ENCODE measurements at regions of chr6 and their contacts with region 1.

Region 1: DNA sequence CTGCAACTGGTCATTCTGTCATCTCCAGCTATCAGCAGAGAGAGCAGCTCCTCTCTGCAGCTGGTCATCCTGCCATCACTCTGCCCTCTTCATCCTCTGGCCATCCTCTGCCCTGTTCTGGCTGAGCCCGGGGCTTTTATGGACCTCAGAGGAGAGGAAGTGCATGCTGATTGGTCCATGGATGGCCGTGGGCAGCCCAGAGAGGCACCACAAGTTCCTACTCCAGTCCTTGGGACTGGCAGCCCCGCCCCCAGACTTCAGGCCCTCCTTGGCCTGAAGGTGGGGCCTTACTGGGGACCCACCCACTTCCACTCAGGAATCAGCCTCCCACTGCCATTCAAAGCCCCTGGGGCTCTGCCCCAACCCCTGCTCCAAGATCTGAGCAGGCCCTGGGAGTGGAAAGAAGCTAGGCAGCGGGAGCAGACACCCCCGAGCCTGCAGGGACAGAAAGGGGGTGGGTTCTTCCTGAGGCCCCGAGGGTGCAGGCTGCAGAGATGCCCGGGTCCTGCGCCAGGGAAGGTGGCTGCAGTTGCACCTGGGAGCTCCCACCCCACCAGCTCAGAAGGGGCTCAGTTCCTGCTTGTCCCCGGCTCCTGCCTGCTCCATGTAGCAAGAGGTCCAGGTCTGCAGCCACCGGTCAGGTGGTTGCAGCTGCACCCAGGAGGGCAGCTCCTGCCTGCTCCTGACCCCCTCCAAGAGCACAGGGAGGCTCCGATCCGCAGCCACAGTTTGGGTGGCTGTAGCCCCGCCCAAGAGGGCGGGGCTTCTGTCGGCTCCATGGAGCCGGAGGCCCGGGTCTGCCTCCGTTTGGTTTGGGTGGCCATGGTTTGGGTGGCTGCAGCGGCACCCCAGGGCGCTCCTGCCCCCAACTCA is 34.1 kb upstream of the HMGA1 start:
- DNase-seq: no peak
- H3K4me3 ChIP-seq: no peak overlapping the region
- H3K4me3 Mint-ChIP-seq: no peak overlapping the region
- H3K27ac ChIP-seq: no peak overlapping the region
- H3K27ac Mint-ChIP-seq: no peak overlapping the region
- H3K4me1 ChIP-seq: peaks cover 5% of the 10 kb centered on the region
- H3K4me1 Mint-ChIP-seq: peaks cover under 1 to 7% (median 1%) of the 10 kb centered on the region in 4 donors
- H3K27me3 ChIP-seq: no peaks in the 10 kb centered on the region
- H3K27me3 Mint-ChIP-seq: no peaks in the 10 kb centered on the region

Region 2: DNA sequence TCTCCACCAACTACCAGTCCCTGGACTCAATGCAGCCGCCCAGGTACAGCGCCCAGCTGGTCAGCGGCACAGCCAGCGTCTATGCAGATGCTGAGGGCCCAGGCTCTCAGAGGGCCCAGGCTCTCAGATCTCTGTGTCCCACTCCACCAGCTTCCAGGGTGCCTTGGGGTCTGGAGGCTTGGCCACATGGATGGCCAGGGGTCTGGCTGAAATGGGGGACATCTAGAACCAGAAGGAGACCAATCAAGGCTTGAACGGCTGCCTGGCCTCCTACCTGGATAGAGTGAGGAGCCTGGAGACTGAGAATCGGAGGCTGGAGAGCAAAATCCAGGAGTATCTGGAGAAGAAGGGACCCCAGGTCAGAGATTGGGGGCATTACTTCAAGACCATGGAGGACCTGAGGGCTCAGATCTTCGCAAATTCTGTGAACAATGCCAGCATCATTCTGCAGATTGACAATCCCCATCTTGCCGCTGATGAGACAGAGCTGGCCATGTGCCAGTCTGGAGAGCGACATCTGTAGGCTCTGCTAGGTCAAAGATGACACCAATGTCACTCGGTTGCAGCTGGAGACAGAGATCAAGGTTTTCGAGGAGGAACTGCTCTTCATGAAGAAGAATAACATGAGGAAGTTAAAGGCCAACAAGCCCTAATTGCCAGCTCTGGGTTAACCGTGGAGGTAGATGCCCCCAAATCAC is 12.6 kb before region 1 on chr6:
- CTCF ChIA-PET with region 1: interaction called, 13 read pairs
- POLR2A ChIA-PET with region 1: interaction called, 4 read pairs
- intact Hi-C with region 1: no loop called
- DNase-seq: peak in 4 of 5 donors; percentile 26 to 54 (median 44)
- H3K4me3 ChIP-seq: no peak overlapping the region
- H3K4me3 Mint-ChIP-seq: no peak overlapping the region
- H3K27ac ChIP-seq: no peak overlapping the region
- H3K27ac Mint-ChIP-seq: peak overlapping the region in 1 of 7 donors; percentile 54
- H3K4me1 ChIP-seq: peaks cover 3% of the 10 kb centered on the region
- H3K4me1 Mint-ChIP-seq: peaks cover 0 to 11% (median 6%) of the 10 kb centered on the region in 4 donors
- H3K27me3 ChIP-seq: no peaks in the 10 kb centered on the region
- H3K27me3 Mint-ChIP-seq: no peaks in the 10 kb centered on the region